HepG2 (cell line): ENCODE measurements at regions of chr14 and their contacts with region 1.

Region 1: GRCh38 chr14:64671591-64671990 is 32.6 kb upstream of the PLEKHG3 start:
- DNase-seq: peak; percentile 59
- ATAC-seq: peak; percentile 62; the same call in 2 of the 3 replicates
- H3K4me3 ChIP-seq: no peak overlapping the region
- H3K27ac ChIP-seq: no peak overlapping the region
- H3K4me1 ChIP-seq: peaks cover 4% of the 10 kb centered on the region; the same call in 1 of the 2 replicates
- H3K27me3 ChIP-seq: peaks cover 2 to 21% of the 10 kb centered on the region in 2 experiments; a peak in 4 of 5 replicates
- CTCF ChIP-seq: peak; percentile 79
- EP300 ChIP-seq: no peak
- POLR2A ChIP-seq: no peak
- RAD21 ChIP-seq: peak; percentile 60; the same call in 1 of the 2 replicates

Region 2: DNA sequence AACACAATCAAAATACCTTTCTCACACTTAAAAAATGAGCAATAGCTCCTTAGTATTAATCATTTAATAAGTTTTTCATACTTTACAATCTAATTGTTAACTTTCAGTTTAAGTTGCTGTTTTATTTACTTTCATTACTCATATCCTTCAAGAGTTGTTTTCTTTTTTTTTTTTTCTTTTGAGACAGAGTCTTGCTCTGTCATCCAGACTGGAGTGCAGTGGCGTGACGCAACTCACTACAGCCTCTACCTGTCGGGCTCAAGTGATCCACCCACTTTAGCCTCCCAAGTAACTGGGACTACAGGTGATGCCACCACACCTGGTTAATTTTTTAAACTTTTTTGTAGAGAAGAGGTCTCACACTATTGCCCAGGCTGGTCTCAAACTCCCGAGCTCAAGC is 150.9 kb before region 1 on chr14:
- CTCF ChIA-PET with region 1: no interaction called
- POLR2A ChIA-PET with region 1: no interaction called
- in situ Hi-C with region 1: no loop called
- intact Hi-C with region 1: no loop called
- DNase-seq: no peak
- ATAC-seq: no peak
- H3K4me3 ChIP-seq: no peak overlapping the region
- H3K27ac ChIP-seq: no peak overlapping the region
- H3K4me1 ChIP-seq: no peaks in the 10 kb centered on the region
- H3K27me3 ChIP-seq: no peaks in the 10 kb centered on the region
- CTCF ChIP-seq: no peak
- EP300 ChIP-seq: no peak
- POLR2A ChIP-seq: no peak
- RAD21 ChIP-seq: no peak

Region 3: DNA sequence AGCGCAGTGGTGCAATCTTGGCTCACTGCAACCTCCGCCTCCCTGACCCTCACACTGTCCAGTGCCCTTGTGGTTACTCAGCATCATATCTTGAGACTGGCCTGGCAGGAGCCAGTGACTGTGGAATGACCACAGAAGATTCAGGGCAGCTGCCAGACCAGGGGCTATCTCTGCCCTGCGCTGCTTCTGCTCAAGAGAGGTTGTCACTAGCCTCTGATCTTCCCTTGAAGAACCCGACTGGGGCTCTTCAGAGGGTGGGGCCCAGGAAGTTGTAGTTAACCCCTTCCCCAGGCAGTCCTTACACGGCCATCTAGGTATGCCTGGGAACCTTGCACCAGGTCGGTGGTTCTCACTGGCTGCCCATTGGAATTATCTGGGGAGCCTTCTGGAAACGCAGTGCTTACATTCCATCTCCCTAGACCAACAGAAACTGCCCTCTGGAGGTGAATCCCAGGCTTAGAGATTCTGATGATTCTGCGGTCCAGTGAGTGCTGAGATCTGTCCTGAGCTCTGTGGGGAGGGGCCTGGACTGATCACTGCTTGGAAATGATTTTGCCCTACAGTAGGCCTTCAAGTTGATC is 74.0 kb after region 1 on chr14:
- CTCF ChIA-PET with region 1: interaction called, 4 read pairs
- POLR2A ChIA-PET with region 1: no interaction called
- in situ Hi-C with region 1: no loop called
- intact Hi-C with region 1: loop called (anchors 1 kb)
- DNase-seq: peak; percentile 28
- ATAC-seq: peak; percentile 62
- H3K4me3 ChIP-seq: no peak overlapping the region
- H3K27ac ChIP-seq: no peak overlapping the region
- H3K4me1 ChIP-seq: no peaks in the 10 kb centered on the region
- H3K27me3 ChIP-seq: no peaks in the 10 kb centered on the region
- CTCF ChIP-seq: peak; percentile 44
- EP300 ChIP-seq: no peak
- POLR2A ChIP-seq: no peak
- RAD21 ChIP-seq: 0 out of 2 replicates have a peak, but pooled peaks have one; percentile 18

Region 4: DNA sequence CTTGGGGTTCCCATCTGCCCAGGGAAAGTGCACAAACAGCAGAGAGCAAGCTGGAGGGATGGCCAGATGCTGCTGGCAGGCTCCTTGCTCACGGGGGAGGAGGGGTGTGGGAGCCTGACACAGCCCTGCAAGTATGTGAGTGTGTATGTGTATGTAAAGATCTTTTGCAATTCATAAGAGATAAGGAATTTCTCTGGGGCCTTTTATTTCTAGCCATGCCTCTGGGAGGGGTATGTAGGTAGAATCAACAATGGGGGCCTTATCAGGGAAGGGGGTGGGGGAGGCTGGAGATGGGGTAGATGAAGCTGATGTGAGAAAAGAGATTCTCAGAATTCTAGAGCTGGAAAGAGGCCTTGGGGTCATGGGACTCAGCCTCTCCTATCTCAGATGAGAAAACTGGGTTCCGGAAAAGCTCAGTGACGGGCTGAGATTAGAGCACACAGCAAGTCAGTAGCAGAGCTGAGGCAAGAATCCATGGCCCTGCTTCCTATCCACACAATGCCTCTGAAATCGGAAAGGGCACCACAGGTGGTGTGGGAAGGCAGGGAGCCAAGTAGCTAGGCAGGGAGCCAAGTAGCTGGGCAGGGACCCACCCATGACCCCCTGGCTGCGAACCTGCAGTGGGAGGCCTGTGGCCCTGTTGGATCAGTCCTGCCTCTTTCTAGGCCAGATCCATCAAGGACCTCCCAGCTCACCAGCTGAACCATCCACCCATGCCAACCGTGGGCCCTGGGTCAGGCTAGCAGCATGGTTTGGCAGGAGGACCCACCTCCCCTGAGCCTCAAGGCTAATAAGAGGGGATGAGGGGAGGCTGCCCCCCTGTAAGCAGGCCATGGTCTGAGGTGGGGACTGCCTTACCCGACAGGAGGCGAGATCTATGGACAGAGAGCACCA is 87.3 kb after region 1 on chr14:
- CTCF ChIA-PET with region 1: interaction called, 51 read pairs
- POLR2A ChIA-PET with region 1: no interaction called
- in situ Hi-C with region 1: loop called (anchors 5 kb)
- intact Hi-C with region 1: loop called (anchors 1 kb)
- DNase-seq: peak; percentile 72
- ATAC-seq: no peak
- H3K4me3 ChIP-seq: no peak overlapping the region
- H3K27ac ChIP-seq: no peak overlapping the region
- H3K4me1 ChIP-seq: peaks cover 22% of the 10 kb centered on the region
- H3K27me3 ChIP-seq: peaks cover 8 to 45% of the 10 kb centered on the region in 2 experiments; a peak in 4 of 5 replicates
- CTCF ChIP-seq: no peak
- EP300 ChIP-seq: no peak
- POLR2A ChIP-seq: no peak
- RAD21 ChIP-seq: no peak

Region 5: DNA sequence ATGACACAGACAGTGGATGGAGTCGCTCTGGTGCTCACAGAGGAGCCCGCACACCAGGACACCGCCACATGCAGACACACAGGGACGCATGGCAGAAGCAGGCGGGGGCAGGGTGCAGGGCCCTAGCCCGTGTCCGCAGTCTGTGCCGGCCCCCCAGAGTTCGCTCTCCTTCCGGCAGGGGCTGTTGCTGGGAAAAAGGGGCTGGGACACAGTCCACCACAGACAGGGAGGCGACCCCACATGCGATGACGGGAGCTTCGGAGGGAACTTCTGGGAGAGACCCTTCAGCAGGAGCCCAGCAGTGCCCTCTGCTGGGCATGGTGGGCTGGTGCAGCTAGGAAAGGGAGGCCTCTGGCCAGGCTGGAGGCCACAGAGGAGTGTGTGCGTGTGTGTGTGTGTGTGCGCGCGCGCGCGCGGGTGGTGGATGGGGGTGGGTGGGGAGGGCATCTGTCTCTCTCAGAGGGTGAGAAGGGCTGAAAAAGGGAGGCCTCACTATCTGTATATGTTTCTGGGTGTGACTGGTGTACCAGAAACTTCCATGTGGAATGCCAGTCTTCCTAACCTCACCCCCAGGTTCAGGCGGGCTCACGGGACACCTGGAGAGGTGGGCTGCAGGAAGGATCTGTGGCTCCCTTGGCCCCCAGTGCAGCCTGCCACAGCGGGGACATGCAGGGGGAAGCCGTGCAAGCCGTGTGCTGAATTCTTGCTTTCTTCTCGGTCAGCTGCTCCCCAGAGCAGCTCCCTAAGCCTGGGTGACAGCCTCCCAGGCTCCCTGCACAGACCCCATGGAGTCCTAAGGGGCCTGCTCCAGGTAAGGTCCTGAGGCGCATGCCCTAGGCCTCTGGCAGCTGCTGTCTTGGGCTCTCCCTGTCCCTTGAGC is 93.3 kb after region 1 on chr14:
- CTCF ChIA-PET with region 1: interaction called, 51 read pairs
- POLR2A ChIA-PET with region 1: no interaction called
- in situ Hi-C with region 1: no loop called
- intact Hi-C with region 1: loop called (anchors 1 kb)
- DNase-seq: peak; percentile 53
- ATAC-seq: peak; percentile 81
- H3K4me3 ChIP-seq: peak overlapping the region in 1 of 3 experiments; percentile 50; a peak in 2 of 6 replicates
- H3K27ac ChIP-seq: no peak overlapping the region
- H3K4me1 ChIP-seq: peaks cover 20% of the 10 kb centered on the region
- H3K27me3 ChIP-seq: peaks cover 4 to 42% of the 10 kb centered on the region in 2 experiments; a peak in 4 of 5 replicates
- CTCF ChIP-seq: peak; percentile 92
- EP300 ChIP-seq: no peak
- POLR2A ChIP-seq: no peak
- RAD21 ChIP-seq: peak; percentile 81

Region 6: DNA sequence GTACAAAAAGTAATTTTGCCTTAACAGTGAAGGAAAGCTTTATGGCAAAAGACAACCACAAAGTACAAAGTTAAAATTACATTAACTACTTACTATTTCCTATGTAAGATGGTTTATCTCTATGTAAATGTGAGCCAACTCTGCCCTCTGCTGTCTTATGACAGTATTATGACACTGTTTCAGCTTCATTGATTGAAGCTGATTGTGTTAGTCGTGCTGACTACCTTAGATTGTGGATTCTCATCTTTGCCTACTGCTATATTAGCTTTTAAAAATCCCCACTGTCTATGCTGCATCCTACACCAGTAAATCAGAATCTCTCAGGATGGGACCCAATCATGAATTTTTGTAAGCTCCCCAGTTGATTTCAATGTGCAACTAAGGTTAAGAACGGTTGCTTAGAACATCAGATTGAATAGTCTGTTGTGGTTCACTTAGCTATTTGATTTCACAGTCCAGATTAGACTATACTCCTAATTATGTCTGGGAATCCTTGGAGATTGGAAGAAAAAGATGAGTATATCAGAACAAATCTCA is 220.3 kb after region 1 on chr14:
- CTCF ChIA-PET with region 1: interaction called, 4 read pairs
- POLR2A ChIA-PET with region 1: no interaction called
- in situ Hi-C with region 1: loop called (anchors 25 kb)
- intact Hi-C with region 1: loop called (anchors 5 kb)
- DNase-seq: peak; percentile 56
- ATAC-seq: peak; percentile 87
- H3K4me3 ChIP-seq: no peak overlapping the region
- H3K27ac ChIP-seq: no peak overlapping the region
- H3K4me1 ChIP-seq: no peaks in the 10 kb centered on the region
- H3K27me3 ChIP-seq: no peaks in the 10 kb centered on the region
- CTCF ChIP-seq: peak; percentile 76
- EP300 ChIP-seq: no peak
- POLR2A ChIP-seq: no peak
- RAD21 ChIP-seq: peak; percentile 51; the same call in 1 of the 2 replicates